Left cardiac atrium (tissue), 4 donors: ENCODE measurements at regions of chr7 and their contacts with region 1.

Region 1: DNA sequence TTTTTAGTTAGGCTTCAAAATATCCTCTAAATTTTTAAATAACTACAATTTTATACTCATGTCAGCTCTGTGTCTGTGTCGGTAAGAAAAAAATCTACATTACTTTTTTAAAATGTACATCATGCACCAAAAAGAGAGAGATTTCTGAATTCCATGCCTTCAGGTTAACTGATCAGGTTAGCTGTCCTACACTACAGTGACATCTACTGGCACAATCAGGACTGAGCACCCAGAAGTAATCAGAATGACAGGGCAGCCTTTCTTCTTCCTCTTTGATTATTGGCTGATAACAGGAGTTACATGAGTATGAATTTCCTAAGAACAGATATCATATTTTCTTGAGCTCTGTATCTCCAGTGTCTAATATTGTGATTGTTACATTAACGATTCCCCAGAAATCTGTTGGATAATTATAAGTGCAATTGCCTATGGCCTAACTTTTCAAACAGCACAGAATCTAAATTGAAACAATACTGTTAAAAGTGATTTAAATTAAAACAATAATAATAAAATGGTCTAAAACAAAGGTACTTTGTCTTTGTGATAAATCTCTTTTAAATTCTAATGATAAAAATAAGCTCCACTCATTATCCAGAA is 41.8 kb upstream of the HYCC1 start:
- DNase-seq: no peak
- ATAC-seq: peak; percentile 67 to 75

Region 2: GRCh38 chr7:22469371-22470143 is 586.1 kb before region 1 on chr7:
- intact Hi-C with region 1: no loop called
- DNase-seq: no peak
- ATAC-seq: no peak

Region 3: DNA sequence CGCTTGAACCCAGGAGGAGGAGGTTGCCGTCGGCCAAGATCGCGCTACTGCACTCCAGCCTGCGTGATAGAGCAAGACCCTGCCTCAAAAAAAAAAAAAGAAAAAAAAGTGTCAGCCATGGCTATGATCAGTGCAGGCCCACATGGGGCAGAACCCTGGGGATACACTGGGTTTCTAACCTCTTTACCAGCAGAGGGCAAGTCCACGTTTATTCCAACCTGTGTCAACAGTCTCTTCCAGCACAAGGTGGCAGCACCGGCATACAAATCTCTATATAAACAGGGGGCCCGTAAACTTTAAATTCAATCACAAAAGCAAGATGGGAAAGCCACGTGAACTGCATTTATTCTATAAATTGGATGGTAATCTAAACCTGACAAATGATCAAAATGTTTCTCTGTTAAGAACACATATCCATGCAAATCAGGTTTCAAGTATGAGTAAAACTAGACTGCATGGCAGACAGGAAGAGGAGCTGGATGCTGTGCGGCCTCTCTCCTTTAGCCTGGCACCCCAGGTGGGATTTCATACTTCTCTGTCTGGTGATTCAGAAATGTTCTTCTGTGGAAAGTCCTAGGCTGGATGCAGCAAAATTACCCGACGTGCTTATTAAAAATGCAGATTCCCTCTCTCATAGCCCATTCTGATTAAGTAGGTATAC is 495.7 kb before region 1 on chr7:
- intact Hi-C with region 1: loop called in 1 of 2 experiments (anchors 5 kb)
- DNase-seq: peak; percentile 81
- ATAC-seq: peak; percentile 61 to 69

Region 4: DNA sequence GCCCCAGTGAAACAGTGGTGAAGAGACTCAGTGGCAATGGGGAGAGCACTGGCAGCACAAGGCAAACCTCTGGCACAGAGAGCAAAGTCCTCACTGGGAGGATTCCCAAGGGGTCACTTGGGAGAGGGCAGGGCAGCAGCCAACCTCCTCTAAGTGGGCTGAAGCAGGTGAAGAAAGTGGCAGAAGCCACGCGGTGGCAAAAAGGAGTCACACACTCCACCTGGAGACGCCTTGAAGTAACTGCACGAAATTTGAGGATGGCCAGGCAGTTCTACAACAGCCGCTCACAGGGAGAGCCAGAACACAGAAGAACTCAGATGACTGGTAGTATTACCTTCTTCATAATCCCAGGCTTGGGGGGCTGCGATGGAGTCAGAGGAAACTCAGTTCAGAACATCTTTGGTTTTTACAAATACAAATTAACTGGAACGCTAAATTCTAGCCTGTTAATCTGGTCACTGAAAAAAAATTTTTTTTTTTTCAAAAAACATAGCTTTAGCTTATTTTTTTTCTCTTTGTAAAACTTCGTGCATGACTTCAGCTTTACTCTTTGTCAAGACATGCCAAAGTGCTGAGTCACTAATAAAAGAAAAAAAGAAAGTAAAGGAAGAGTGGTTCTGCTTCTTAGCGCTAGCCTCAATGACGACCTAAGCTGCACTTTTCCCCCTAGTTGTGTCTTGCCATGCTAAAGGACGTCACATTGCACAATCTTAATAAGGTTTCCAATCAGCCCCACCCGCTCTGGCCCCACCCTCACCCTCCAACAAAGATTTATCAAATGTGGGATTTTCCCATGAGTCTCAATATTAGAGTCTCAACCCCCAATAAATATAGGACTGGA is 329.1 kb before region 1 on chr7:
- intact Hi-C with region 1: loop called in 1 of 2 experiments (anchors 10 kb)
- DNase-seq: peak; percentile 58
- ATAC-seq: peak; percentile 45 to 61

Region 5: DNA sequence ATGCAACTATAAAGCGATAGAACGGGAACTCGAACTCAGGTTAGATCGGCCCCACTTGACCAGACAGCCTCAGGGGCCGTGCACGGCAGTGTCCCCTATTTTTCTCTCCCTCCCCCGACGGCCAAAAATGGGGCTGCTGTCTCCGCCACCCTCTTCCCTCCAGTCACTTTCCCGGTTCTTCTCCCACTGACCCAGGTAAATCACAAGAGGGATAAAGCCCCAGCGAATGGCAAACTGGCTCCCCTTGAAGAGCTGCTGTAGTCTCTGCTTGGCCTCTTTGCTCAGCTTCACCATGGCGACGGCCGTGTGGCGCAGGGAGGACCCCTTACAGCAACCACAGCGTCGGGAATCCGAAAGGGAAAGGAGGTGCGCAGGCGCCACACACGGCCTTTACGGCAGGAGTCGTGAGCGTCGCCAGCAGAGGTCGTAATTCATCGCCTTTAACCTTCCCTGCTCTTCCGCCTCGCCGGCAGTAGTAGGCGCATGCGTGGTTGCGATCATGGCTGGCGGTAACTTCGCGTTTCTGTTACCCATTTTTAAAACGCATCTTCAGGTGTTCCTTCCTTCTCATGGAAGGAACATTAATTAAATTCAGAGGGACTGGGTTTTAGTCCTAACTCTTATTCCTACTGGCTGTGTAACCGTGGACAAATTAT is 233.1 kb before region 1 on chr7 and contains the start of gene TOMM7:
- intact Hi-C with region 1: loop called in 1 of 2 experiments (anchors 10 kb)
- DNase-seq: peak; percentile 93
- ATAC-seq: peak; percentile 95 to 97
- total RNA-seq, gene TOMM7: 365 to 444 TPM

Region 6: DNA sequence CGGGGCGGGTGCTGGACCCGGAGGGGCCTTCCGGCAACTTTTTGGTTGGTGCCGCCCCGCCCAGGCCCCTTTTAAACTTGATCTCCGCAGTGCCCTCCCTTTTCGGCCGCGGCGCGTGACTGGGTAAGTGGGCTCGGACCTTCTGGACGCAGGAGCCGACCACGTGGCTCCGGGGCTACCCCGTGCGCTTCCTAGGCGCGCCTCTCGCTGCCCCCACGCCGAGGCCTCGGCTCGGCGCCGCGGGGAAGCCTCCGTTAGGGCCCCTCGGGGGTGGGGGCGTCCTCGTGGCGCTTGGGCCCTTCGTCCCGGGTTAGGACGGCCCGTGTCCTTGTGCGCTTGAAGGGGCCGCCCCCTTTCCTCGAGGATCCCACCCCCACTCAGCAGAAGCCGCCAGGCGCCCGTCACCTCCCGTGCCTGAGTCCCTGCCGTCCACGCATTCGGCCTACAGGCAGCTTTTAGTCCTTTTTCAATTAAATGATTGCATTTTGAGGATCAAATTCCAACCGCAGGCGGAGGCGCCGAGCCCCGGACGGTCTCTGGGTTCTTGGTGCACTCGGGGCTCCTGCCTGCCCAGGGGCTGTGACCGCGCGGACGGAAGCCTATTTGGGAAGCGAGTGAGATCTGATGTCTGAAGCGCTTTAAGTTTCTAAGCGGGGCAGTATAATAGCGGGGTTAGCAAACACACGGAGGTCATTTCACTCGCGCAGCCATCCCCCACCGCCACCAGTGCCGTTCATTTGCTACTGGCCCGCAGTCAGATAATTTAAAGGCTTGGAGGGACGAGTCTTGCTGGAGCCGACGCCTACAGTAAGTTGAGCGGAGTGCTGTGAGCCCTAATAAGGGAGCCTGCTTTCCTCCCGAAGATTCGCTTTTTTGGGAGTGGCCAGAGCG is 201.3 kb before region 1 on chr7:
- intact Hi-C with region 1: loop called in 1 of 2 experiments (anchors 10 kb)
- DNase-seq: peak; percentile 95
- ATAC-seq: peak; percentile 92 to 94

Region 7: DNA sequence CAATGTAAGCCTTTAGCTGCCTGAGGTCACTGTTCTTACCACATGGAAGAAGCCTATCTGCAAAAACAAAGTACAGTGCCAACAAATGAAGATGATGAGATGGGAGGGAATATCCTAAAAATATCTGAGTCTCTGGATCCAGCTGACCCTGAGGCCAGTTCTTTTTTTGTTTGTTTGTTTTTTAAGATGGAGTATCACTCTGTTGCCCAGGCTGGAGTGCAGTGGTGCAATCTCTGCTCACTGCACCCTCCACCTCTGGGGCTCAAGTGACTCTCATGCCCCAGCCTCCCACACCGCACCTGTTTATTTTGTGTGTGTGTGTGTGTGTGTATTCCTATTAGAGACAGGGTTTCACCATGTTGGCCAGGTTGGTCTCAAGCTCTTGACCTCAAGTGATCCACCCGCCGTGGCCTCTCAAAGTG is 86.7 kb before region 1 on chr7:
- intact Hi-C with region 1: loop called in 1 of 2 experiments (anchors 10 kb)
- DNase-seq: no peak
- ATAC-seq: no peak